ENCODE measurements at regions of chr4 and their contacts with region 1.

Region 1: GRCh38 chr4:83083925-83084475 is 30.5 kb downstream of the PLAC8 start:
- DNase-seq: peak; percentile 78
- H3K4me3 Mint-ChIP-seq: peak overlapping the region; percentile 16
- H3K27ac Mint-ChIP-seq: peak overlapping the region; percentile 78
- H3K4me1 Mint-ChIP-seq: peaks cover 31% of the 10 kb centered on the region
- H3K27me3 Mint-ChIP-seq: no peaks in the 10 kb centered on the region

Region 2: GRCh38 chr4:82913305-82913704 is 170.7 kb before region 1 on chr4:
- CTCF ChIA-PET with region 1: no interaction called
- POLR2A ChIA-PET with region 1: no interaction called
- DNase-seq: no peak
- H3K4me3 Mint-ChIP-seq: no peak overlapping the region
- H3K27ac Mint-ChIP-seq: no peak overlapping the region
- H3K4me1 Mint-ChIP-seq: no peaks in the 10 kb centered on the region
- H3K27me3 Mint-ChIP-seq: no peaks in the 10 kb centered on the region

Region 3: DNA sequence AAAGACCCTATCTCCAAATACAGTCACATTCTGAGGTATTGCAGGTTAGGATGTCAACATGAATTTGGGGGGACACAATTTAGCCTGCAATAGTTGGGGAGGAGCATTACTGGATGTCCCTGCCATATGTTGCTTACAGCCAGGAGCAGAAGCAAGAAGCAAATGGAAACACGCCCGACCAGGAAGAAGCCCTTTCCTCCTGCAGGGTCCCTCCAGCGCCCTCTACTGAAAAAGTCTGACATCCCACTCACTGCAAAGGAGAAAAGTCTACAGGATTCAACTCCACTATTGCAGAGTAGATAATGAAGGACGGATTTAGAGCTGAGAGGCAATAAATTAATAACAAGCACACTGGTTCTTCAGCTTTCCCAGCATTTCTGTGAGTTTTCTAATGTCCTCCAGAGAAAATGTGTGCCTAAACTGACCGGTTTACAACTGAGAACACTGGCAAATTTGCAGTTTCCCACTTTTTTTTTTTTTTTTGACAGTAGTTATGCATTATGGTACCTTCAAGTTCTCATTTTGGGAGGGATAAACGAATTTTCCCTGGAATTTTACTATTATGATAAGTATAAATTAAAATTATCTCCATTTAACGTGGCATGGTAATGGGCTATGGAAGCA is 168.9 kb after region 1 on chr4:
- CTCF ChIA-PET with region 1: interaction called, 18 read pairs
- POLR2A ChIA-PET with region 1: interaction called, 6 read pairs
- DNase-seq: peak; percentile 77
- H3K4me3 Mint-ChIP-seq: no peak overlapping the region
- H3K27ac Mint-ChIP-seq: no peak overlapping the region
- H3K4me1 Mint-ChIP-seq: peaks cover 21% of the 10 kb centered on the region
- H3K27me3 Mint-ChIP-seq: peaks cover 16% of the 10 kb centered on the region